HepG2 (cell line): ENCODE measurements at regions of chr16 and their contacts with region 1.

Region 1: DNA sequence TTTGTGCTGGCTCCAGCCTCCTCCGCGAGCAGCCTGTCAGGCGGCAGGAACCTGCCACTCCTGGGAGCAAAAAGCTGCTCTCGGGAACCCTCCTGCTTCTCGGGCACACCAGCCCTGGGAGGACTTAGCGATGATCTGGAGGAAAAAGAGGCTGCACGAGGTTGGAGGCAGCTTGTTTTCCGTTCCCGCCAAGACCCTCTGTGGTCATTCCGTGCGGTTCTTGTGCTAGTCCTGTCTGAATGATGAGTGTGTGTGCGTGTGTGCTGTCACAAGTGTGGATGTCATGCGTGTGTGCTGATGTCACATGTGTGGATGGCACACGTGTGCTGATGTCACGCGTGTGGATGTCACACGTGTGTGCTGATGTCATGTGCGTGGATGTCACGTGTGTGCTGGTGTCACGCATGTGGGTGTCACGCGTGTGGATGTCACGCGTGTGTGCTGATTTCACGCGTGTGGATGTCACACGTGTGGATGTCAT is 150.0 kb downstream of the NPIPB11 start:
- DNase-seq: no peak
- ATAC-seq: no peak
- H3K4me3 ChIP-seq: no peak overlapping the region
- H3K27ac ChIP-seq: no peak overlapping the region
- H3K4me1 ChIP-seq: peaks cover 61% of the 10 kb centered on the region
- H3K27me3 ChIP-seq: peaks cover 5 to 28% of the 10 kb centered on the region in 2 experiments
- CTCF ChIP-seq: no peak
- EP300 ChIP-seq: no peak
- POLR2A ChIP-seq: no peak
- RAD21 ChIP-seq: no peak

Region 2: GRCh38 chr16:29112755-29113347 is 143.7 kb before region 1 on chr16:
- CTCF ChIA-PET with region 1: no interaction called
- POLR2A ChIA-PET with region 1: no interaction called
- in situ Hi-C with region 1: loop called (anchors 10 kb)
- intact Hi-C with region 1: loop called (anchors 1 kb)
- DNase-seq: no peak
- ATAC-seq: no peak
- H3K4me3 ChIP-seq: no peak overlapping the region
- H3K27ac ChIP-seq: no peak overlapping the region
- H3K4me1 ChIP-seq: peaks cover 19% of the 10 kb centered on the region
- H3K27me3 ChIP-seq: peaks cover 2 to 20% of the 10 kb centered on the region in 2 experiments; a peak in 3 of 5 replicates
- CTCF ChIP-seq: no peak
- EP300 ChIP-seq: no peak
- POLR2A ChIP-seq: no peak
- RAD21 ChIP-seq: no peak

Region 3: DNA sequence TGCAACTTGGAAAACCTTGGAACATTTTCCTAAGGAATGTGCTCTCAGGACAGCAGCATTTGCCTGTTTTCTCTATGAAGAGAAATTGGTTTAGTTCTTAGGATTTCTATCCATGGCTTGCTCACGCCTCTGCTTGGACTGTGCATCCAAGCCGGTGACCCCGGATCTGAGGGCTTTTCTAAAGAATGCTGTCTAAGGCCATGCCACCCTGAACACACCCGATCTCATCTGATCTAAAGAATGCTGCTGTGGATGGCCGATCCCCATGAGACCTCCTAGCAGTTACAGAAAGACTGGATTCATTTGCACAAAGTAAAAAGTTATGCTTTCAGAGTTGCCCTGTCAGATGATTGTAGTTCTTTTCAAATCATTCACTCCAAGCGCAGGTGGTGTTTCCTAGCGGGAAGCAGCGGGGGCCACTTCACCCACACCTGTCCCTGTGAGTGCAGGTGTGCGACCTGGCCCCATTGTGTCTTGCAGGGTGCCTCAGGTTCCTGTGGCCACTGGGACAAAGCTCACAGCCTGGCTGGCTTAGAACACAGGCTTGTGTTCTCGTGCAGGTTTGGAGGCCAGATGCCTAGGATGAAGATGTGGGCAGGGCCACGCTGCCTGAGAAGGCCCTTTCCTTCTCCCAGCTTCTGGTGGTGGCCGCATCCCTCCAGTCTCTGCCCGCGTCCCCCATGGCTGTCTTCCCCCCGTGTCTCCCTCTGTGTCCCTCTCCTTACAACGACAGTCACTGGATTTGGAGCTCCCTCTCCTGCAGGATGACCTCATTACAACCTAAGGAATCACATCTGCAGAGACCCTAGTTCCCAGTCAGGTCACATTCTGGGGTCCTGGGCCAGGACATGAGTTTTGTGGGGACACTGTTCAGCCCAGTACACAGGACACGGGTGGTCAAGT is 59.3 kb after region 1 on chr16:
- CTCF ChIA-PET with region 1: no interaction called
- POLR2A ChIA-PET with region 1: no interaction called
- in situ Hi-C with region 1: no loop called
- intact Hi-C with region 1: loop called (anchors 10 kb)
- DNase-seq: no peak
- ATAC-seq: peak; percentile 50
- H3K4me3 ChIP-seq: peak overlapping the region in 1 of 3 experiments; percentile 14; a peak in 1 of 6 replicates
- H3K27ac ChIP-seq: no peak overlapping the region
- H3K4me1 ChIP-seq: peaks cover 51% of the 10 kb centered on the region
- H3K27me3 ChIP-seq: peaks cover 0 to 8% of the 10 kb centered on the region in 2 experiments; a peak in 2 of 5 replicates
- CTCF ChIP-seq: peak; percentile 85
- EP300 ChIP-seq: no peak
- POLR2A ChIP-seq: no peak
- RAD21 ChIP-seq: peak; percentile 35; the same call in 1 of the 2 replicates